ENCODE measurements at regions of chr6 and their contacts with region 1.

Region 1: GRCh38 chr6:37169496-37170272 is at the start of gene PIM1:
- DNase-seq: peak; percentile 98 to 100 (median 99)
- ATAC-seq: peak; percentile 79
- H3K4me3 ChIP-seq: peak within 1 kb of the TSS; percentile 97
- H3K27ac ChIP-seq: peak within 1 kb of the TSS; percentile 91
- H3K4me1 ChIP-seq: peaks cover 7 to 29% of the 10 kb centered on the region in 2 experiments; a peak in 4 of 5 replicates
- H3K27me3 ChIP-seq: no peaks in the 10 kb centered on the region
- CTCF ChIP-seq: peak in 1 of 3 experiments; percentile 10; a peak in 2 of 6 replicates
- EP300 ChIP-seq: peak; percentile 51
- POLR2A ChIP-seq: peak; percentile 51; the same call in 1 of the 2 replicates
- RAD21 ChIP-seq: peak; percentile 2 to 12; a peak in 3 of 4 replicates
- polyA plus RNA-seq, gene PIM1: 19.0 to 62.4 TPM

Region 2: DNA sequence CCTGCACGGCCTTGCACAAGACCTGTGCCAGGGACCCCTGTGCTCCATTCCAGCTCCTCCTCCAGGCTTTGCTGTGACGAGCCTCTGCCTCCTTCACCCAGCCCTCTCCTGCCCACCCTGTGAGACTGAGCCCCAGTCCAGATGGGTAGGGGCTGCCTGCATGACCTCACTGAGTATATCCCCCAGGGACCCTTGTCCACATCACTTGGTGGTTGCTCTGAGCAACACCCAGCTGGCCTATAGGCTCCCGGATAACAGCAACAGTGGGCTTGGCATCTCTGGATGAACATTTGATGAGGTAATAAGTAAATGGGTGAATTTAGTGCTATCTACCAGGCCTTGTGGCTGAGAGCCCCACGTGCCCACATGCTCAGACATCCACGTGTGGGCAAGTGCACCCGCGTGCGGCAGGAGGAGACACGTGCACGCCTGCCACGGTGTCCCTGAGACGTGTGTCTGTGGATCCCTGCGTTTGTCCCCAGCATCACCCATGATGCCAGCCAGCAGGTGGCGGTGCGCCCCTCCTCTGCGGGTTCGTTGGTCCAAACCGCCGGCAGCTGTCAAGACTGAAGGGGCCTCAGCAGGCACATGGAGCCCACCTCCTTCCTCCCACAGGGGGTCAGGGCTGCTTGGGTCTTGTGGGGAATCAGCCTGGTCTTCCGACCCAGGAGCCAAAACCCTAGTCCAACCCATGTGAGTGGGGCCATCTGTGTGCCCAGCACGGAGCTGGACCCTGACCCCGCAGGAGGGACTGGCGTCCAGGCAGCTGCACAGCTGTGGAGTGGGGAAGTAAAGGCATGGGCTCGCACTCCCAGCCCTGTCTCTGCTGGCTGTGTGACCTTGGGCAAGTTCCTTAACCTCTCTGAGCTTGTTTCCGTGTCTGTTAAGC is 118.3 kb before region 1 on chr6:
- CTCF ChIA-PET with region 1: interaction called, 83 read pairs
- POLR2A ChIA-PET with region 1: interaction called, 36 read pairs
- in situ Hi-C with region 1: loop called (anchors 5 kb)
- intact Hi-C with region 1: loop called (anchors 1 kb)
- DNase-seq: peak; percentile 86 to 94 (median 87)
- ATAC-seq: peak; percentile 75
- H3K4me3 ChIP-seq: no peak overlapping the region
- H3K27ac ChIP-seq: peak overlapping the region; percentile 95
- H3K4me1 ChIP-seq: peaks cover 52 to 77% of the 10 kb centered on the region in 2 experiments
- H3K27me3 ChIP-seq: no peaks in the 10 kb centered on the region
- CTCF ChIP-seq: peak; percentile 96 to 97 (median 96)
- EP300 ChIP-seq: peak; percentile 35; the same call in 1 of the 2 replicates
- POLR2A ChIP-seq: no peak
- RAD21 ChIP-seq: peak; percentile 98 to 99

Region 3: GRCh38 chr6:37102279-37103168 is 67.2 kb before region 1 on chr6:
- CTCF ChIA-PET with region 1: interaction called, 3 read pairs
- POLR2A ChIA-PET with region 1: interaction called, 3 read pairs
- in situ Hi-C with region 1: no loop called
- intact Hi-C with region 1: loop called (anchors 5 kb)
- DNase-seq: peak; percentile 81 to 87 (median 84)
- ATAC-seq: peak; percentile 83
- H3K4me3 ChIP-seq: peak overlapping the region; percentile 33
- H3K27ac ChIP-seq: peak overlapping the region; percentile 63
- H3K4me1 ChIP-seq: peaks cover 45 to 56% of the 10 kb centered on the region in 2 experiments
- H3K27me3 ChIP-seq: no peaks in the 10 kb centered on the region
- CTCF ChIP-seq: 0 out of 6 replicates have a peak, but pooled peaks of 1 of the 3 experiments have one; percentile 0
- EP300 ChIP-seq: no peak
- POLR2A ChIP-seq: peak; percentile 37; the same call in 1 of the 2 replicates
- RAD21 ChIP-seq: no peak; a peak in 2 of 4 replicates

Region 4: DNA sequence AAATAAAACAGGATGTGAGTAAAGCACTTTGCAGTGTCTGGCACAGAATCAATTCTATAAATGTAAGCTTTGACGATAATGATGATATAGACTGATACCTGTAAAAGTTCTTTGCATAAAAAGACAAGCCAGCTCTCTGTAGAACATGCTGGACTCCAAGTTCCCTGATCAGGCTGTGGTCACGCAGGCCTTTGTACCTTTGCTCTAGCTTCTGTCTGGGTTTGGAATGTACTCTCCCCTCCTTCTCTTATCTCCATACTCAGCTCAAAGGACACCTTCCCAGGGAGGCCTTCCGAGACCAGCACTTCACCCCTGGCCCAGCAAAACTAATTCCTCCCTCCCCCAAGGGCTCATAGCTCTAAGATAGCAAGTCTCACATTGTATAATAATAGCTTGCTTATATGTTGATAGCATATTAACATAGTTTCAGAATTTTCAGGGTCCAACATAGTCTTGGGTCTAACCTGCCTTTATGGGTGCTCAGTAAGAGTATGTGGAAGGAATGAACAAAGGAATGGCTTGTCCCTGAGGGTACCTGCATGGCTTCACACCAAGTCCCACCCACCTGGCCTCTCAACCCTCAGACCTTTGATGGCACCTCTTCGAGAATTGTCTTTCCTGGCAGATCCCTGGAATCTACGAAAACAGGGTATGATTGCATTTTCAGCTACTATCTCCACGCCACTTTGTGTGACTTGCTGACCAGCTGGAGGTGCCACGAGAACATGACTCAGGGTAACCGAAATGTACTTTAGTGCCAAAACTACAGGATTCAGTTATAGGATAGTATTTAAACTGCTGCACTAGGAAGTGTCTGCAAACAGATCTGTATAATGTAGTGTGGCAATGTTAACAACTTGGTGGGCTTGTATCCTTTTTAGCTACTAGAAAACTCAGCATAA is 41.5 kb before region 1 on chr6:
- CTCF ChIA-PET with region 1: no interaction called
- POLR2A ChIA-PET with region 1: interaction called, 5 read pairs
- in situ Hi-C with region 1: no loop called
- intact Hi-C with region 1: loop called (anchors 1 kb)
- DNase-seq: peak; percentile 65 to 80 (median 72)
- ATAC-seq: peak; percentile 70
- H3K4me3 ChIP-seq: no peak overlapping the region
- H3K27ac ChIP-seq: peak overlapping the region; percentile 73
- H3K4me1 ChIP-seq: peaks cover 50 to 58% of the 10 kb centered on the region in 2 experiments
- H3K27me3 ChIP-seq: no peaks in the 10 kb centered on the region
- CTCF ChIP-seq: peak in 1 of 3 experiments; percentile 20; a peak in 2 of 6 replicates
- EP300 ChIP-seq: no peak; the same call in 1 of the 2 replicates
- POLR2A ChIP-seq: no peak
- RAD21 ChIP-seq: peak; percentile 37 to 42; a peak in 3 of 4 replicates

Region 5: GRCh38 chr6:37257634-37258404 is 88.1 kb after region 1 on chr6 and contains the starts of genes TBC1D22B and TMEM217:
- CTCF ChIA-PET with region 1: interaction called, 3 read pairs
- POLR2A ChIA-PET with region 1: interaction called, 3 read pairs
- in situ Hi-C with region 1: no loop called
- intact Hi-C with region 1: loop called (anchors 5 kb)
- DNase-seq: peak; percentile 97 to 100 (median 98)
- ATAC-seq: peak; percentile 98
- H3K4me3 ChIP-seq: peak within 1 kb of the TSS; percentile 91
- H3K27ac ChIP-seq: peak within 1 kb of the TSS; percentile 94
- H3K4me1 ChIP-seq: peaks cover 7 to 14% of the 10 kb centered on the region in 2 experiments; a peak in 4 of 5 replicates
- H3K27me3 ChIP-seq: no peaks in the 10 kb centered on the region
- CTCF ChIP-seq: no peak
- EP300 ChIP-seq: no peak
- POLR2A ChIP-seq: peak; percentile 91
- RAD21 ChIP-seq: peak in 1 of 2 experiments; percentile 47; a peak in 3 of 4 replicates
- polyA plus RNA-seq, gene TBC1D22B: 4.8 to 6.4 TPM
- polyA plus RNA-seq, gene TMEM217: 1.8 to 1.9 TPM

Region 6: DNA sequence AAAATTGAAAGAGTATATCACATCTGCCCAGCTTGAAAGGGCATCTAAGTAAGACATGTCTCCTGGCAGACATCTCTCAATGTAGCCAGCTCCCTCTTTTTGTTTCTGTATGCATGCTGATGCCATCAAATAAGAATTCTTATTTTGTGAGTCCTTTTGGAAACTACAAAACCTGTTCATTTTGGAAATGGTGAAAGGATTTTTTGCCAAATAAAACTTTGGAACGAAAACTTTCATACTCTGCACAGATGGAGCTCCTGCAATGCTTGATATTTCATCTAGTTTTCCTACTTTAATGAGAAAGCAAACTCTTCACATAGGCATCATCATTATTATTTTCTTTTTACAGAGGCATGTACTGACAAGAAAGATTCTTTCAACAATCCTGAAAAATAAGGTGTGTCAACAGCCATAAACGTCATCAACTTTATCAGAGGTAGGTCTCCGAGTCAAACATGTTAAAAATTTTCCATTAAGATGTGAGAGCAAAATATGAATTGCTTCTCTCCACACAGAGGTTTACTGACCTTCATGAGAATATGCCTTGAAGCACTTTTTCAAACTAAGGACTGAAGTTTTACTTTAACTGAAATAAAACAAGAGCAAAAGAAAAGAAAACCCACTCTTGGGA is 237.2 kb after region 1 on chr6:
- CTCF ChIA-PET with region 1: no interaction called
- POLR2A ChIA-PET with region 1: no interaction called
- in situ Hi-C with region 1: no loop called
- intact Hi-C with region 1: no loop called
- DNase-seq: no peak
- ATAC-seq: no peak
- H3K4me3 ChIP-seq: no peak overlapping the region
- H3K27ac ChIP-seq: no peak overlapping the region
- H3K4me1 ChIP-seq: peaks cover 0 to 7% of the 10 kb centered on the region in 2 experiments; a peak in 2 of 5 replicates
- H3K27me3 ChIP-seq: no peaks in the 10 kb centered on the region
- CTCF ChIP-seq: no peak
- EP300 ChIP-seq: no peak
- POLR2A ChIP-seq: no peak
- RAD21 ChIP-seq: no peak